ENCODE measurements at regions of chr10 and their contacts with region 1.

Region 1: GRCh38 chr10:73246783-73247508 is at the start of gene DNAJC9:
- DNase-seq: peak; percentile 98
- H3K4me3 Mint-ChIP-seq: peak within 1 kb of the TSS; percentile 100
- H3K27ac Mint-ChIP-seq: peak within 1 kb of the TSS; percentile 97
- H3K4me1 Mint-ChIP-seq: peaks cover 67% of the 10 kb centered on the region
- H3K27me3 Mint-ChIP-seq: no peaks in the 10 kb centered on the region
- total RNA-seq, gene DNAJC9: 55.2 to 57.2 TPM

Region 2: GRCh38 chr10:72215652-72216549 is 1031.0 kb before region 1 on chr10 and contains the starts of genes ANAPC16 and ASCC1:
- CTCF ChIA-PET with region 1: no interaction called
- intact Hi-C with region 1: loop called (anchors 5 kb)
- DNase-seq: peak; percentile 93
- H3K4me3 Mint-ChIP-seq: peak within 1 kb of the TSS; percentile 91
- H3K27ac Mint-ChIP-seq: peak within 1 kb of the TSS; percentile 98
- H3K4me1 Mint-ChIP-seq: peaks cover 67% of the 10 kb centered on the region
- H3K27me3 Mint-ChIP-seq: no peaks in the 10 kb centered on the region
- total RNA-seq, gene ANAPC16: 127 to 128 TPM
- total RNA-seq, gene ASCC1: 61.6 to 68.5 TPM

Region 3: GRCh38 chr10:72659694-72660093 is 587.3 kb before region 1 on chr10:
- CTCF ChIA-PET with region 1: no interaction called
- intact Hi-C with region 1: no loop called
- DNase-seq: no peak
- H3K4me3 Mint-ChIP-seq: no peak overlapping the region
- H3K27ac Mint-ChIP-seq: no peak overlapping the region
- H3K4me1 Mint-ChIP-seq: no peaks in the 10 kb centered on the region
- H3K27me3 Mint-ChIP-seq: no peaks in the 10 kb centered on the region

Region 4: GRCh38 chr10:72692057-72692910 is 554.7 kb before region 1 on chr10 and contains the start of gene MCU:
- CTCF ChIA-PET with region 1: no interaction called
- intact Hi-C with region 1: loop called (anchors 2 kb)
- DNase-seq: peak; percentile 95
- H3K4me3 Mint-ChIP-seq: peak within 1 kb of the TSS; percentile 83
- H3K27ac Mint-ChIP-seq: no peak within 1 kb of the TSS
- H3K4me1 Mint-ChIP-seq: peaks cover 32% of the 10 kb centered on the region
- H3K27me3 Mint-ChIP-seq: no peaks in the 10 kb centered on the region
- total RNA-seq, gene MCU: 23.6 to 25.6 TPM

Region 5: DNA sequence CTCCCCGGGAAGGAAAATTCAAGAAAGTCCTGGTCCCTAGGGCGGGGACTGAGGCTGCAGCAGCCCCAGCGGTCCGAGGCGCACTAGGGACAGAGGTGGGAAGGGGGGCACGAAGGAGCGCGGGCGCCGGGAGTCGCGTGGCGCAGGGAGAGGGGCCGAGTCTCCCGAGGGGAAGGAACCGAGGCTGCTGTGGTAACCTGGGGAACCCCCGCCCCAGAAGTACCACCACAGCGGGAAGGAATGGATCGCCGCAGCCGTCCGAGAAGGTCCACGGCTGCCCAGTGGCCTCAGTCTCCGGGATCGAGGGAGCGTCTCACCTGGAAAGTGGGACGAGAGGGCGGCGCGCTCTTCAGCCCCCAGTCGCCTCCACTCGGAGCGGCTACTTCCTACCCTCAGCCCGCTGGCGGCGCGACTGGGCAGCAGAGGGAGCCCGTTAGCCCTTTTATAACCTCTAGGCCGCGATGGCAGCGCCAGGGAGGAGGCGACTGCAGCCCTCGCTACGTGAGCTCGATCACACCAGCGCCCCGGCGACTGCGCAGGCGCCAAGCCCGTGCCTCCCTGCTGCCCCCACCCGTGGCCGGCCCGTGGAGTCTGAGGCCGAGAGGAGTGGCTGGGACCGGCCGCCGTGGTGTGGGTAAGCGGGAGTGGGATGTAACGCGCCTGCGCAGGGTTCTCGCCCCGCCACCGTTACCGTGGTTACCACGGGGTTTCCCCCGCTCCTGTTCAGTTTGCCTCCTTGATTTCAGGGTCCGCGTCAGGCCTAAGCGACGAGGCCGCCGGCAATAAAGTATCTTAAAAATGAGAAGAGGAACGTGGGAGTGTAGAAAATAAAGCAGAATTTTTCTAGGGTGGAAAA is 150.3 kb before region 1 on chr10 and contains the start of gene P4HA1:
- CTCF ChIA-PET with region 1: no interaction called
- intact Hi-C with region 1: loop called (anchors 1 kb)
- DNase-seq: peak; percentile 96
- H3K4me3 Mint-ChIP-seq: peak within 1 kb of the TSS; percentile 83
- H3K27ac Mint-ChIP-seq: peak within 1 kb of the TSS; percentile 93
- H3K4me1 Mint-ChIP-seq: peaks cover 32% of the 10 kb centered on the region
- H3K27me3 Mint-ChIP-seq: no peaks in the 10 kb centered on the region
- total RNA-seq, gene P4HA1: 15.3 to 15.9 TPM

Region 6: GRCh38 chr10:73167783-73168464 is 79.0 kb before region 1 on chr10 and contains the starts of genes ECD and FAM149B1:
- CTCF ChIA-PET with region 1: no interaction called
- intact Hi-C with region 1: loop called (anchors 1 kb)
- DNase-seq: peak; percentile 96
- H3K4me3 Mint-ChIP-seq: peak within 1 kb of the TSS; percentile 100
- H3K27ac Mint-ChIP-seq: peak within 1 kb of the TSS; percentile 100
- H3K4me1 Mint-ChIP-seq: peaks cover 37% of the 10 kb centered on the region
- H3K27me3 Mint-ChIP-seq: no peaks in the 10 kb centered on the region
- total RNA-seq, gene ECD: 26.5 to 28.1 TPM
- total RNA-seq, gene FAM149B1: 13.3 to 13.7 TPM

Region 7: DNA sequence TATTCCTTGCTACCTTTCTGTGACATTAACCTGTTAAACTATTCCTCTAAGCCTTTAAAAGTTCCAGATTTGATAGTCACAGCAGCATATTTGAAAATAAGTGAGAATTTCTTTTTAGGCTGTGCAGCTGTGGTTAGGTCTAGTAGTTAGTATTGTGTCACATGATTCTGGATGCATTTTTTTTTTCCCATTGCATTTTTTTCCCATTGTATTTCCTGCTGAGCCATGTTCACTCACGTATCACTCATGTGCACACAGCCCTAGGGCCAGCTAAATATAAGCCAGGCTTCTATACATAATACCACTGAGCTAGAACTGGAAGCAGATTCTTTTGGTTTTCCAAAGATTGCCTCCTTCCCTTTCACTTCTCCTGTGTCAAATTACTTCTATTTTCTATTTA is 37.2 kb before region 1 on chr10:
- CTCF ChIA-PET with region 1: no interaction called
- intact Hi-C with region 1: no loop called
- DNase-seq: no peak
- H3K4me3 Mint-ChIP-seq: no peak overlapping the region
- H3K27ac Mint-ChIP-seq: no peak overlapping the region
- H3K4me1 Mint-ChIP-seq: no peaks in the 10 kb centered on the region
- H3K27me3 Mint-ChIP-seq: no peaks in the 10 kb centered on the region

Region 8: GRCh38 chr10:73296946-73297345 is 50.0 kb after region 1 on chr10:
- CTCF ChIA-PET with region 1: no interaction called
- intact Hi-C with region 1: no loop called
- DNase-seq: no peak
- H3K4me3 Mint-ChIP-seq: no peak overlapping the region
- H3K27ac Mint-ChIP-seq: no peak overlapping the region
- H3K4me1 Mint-ChIP-seq: no peaks in the 10 kb centered on the region
- H3K27me3 Mint-ChIP-seq: no peaks in the 10 kb centered on the region

Region 9: GRCh38 chr10:73785221-73785720 is 538.3 kb after region 1 on chr10 and contains the start of gene ZSWIM8:
- CTCF ChIA-PET with region 1: no interaction called
- intact Hi-C with region 1: loop called (anchors 2 kb)
- DNase-seq: peak; percentile 89
- H3K4me3 Mint-ChIP-seq: peak within 1 kb of the TSS; percentile 98
- H3K27ac Mint-ChIP-seq: peak within 1 kb of the TSS; percentile 97
- H3K4me1 Mint-ChIP-seq: peaks cover 42% of the 10 kb centered on the region
- H3K27me3 Mint-ChIP-seq: no peaks in the 10 kb centered on the region
- total RNA-seq, gene ZSWIM8: 25.8 to 26.7 TPM

Measured in activated naive CD4-positive, alpha-beta T cell treated with anti-CD3 and anti-CD28 coated beads for 36 hours (primary cell).